Right cardiac atrium (tissue), 5 donors: ENCODE measurements at regions of chr4 and their contacts with region 1.

Region 1: DNA sequence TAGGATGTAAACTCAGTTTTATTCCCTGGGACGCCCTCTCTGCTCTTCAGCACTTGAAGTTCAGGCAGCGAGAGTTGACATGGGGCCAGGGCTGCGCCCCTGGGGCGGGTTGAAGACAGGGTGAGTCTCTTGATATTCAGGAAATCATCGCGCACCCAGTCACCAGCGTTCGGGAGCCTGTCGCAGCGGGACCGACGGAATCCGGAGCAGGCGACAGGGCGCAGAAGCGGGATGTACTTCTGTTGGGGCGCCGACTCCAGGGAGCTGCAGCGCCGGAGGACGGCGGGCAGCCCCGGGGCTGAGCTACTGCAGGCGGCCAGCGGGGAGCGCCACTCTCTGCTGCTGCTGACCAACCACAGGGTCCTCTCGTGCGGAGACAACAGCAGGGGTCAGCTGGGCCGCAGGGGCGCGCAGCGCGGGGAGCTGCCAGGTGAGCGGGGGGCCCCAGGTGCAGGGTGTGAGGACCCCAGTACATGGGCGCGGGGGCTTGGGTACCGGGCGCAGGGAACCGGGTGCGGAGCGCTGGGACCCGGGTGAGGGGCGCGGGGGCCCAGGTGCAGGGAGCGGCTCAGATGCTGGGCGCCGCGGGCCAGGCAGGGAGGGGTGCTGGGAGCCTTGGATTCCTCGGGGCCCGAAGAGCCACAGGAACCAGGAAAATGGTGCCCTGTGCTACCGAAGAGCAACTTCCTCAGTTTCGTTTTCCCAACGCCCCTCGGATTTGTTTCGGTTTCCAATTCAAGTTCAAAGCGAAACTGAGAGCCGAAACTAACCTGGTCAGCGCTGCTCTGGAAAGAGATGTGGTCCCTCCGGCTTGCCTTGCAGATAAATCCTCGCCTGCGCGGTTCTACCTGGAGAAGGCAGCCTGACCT is at the start of gene HERC6:
- DNase-seq: peak; percentile 79 to 91 (median 90)
- ATAC-seq: peak; percentile 97
- H3K4me3 ChIP-seq: peak within 1 kb of the TSS; percentile 92
- H3K27ac ChIP-seq: peak within 1 kb of the TSS; percentile 76
- H3K4me1 ChIP-seq: no peaks in the 10 kb centered on the region
- H3K27me3 ChIP-seq: no peaks in the 10 kb centered on the region
- total RNA-seq, gene HERC6: 7.7 to 10.9 (median 9.8) TPM

Region 2: DNA sequence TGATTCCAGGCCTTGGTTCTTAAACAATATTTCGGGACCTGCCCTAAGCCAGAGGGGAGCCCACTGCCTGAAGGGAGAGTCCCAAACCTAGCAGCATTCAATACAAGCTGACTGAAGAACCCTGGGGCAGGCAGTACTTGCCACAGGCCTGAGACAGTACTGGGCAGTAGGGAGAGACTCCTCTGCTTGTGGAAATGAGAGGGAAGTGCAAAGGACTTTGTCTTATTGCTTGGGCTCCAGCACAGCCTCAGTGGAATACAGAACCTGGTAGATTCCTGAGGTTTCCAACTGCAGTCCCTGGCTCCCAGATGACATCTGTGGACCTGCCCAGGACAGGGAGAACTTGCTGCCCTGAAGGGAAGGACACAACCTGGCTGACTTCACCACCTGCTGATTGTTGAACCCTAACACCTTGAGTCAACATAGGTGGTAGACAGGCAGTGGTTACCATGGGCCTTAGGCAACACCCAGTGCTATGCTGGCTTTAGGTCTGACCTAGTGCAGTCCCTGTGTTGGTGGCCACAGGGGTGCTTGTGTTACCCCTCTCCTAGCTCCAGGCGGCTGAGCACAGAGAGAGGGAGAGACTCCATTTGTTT is 200.2 kb before region 1 on chr4:
- intact Hi-C with region 1: no loop called
- DNase-seq: no peak
- ATAC-seq: no peak
- H3K4me3 ChIP-seq: no peak overlapping the region
- H3K27ac ChIP-seq: no peak overlapping the region
- H3K4me1 ChIP-seq: no peaks in the 10 kb centered on the region
- H3K27me3 ChIP-seq: no peaks in the 10 kb centered on the region

Region 3: GRCh38 chr4:88225232-88226105 is 153.5 kb before region 1 on chr4:
- intact Hi-C with region 1: loop called in 1 of 4 experiments (anchors 5 kb)
- DNase-seq: no peak
- ATAC-seq: peak; percentile 26 to 41
- H3K4me3 ChIP-seq: no peak overlapping the region
- H3K27ac ChIP-seq: peak overlapping the region; percentile 6
- H3K4me1 ChIP-seq: peaks cover 2% of the 10 kb centered on the region
- H3K27me3 ChIP-seq: no peaks in the 10 kb centered on the region

Region 4: GRCh38 chr4:88284439-88285234 is 94.3 kb before region 1 on chr4 and contains the start of gene PPM1K:
- intact Hi-C with region 1: loop called in 1 of 4 experiments (anchors 10 kb)
- DNase-seq: peak; percentile 100
- ATAC-seq: peak; percentile 99
- H3K4me3 ChIP-seq: peak within 1 kb of the TSS; percentile 77
- H3K27ac ChIP-seq: peak within 1 kb of the TSS; percentile 96
- H3K4me1 ChIP-seq: peaks cover 2% of the 10 kb centered on the region
- H3K27me3 ChIP-seq: no peaks in the 10 kb centered on the region
- total RNA-seq, gene PPM1K: 74.6 to 109 (median 91.3) TPM

Region 5: DNA sequence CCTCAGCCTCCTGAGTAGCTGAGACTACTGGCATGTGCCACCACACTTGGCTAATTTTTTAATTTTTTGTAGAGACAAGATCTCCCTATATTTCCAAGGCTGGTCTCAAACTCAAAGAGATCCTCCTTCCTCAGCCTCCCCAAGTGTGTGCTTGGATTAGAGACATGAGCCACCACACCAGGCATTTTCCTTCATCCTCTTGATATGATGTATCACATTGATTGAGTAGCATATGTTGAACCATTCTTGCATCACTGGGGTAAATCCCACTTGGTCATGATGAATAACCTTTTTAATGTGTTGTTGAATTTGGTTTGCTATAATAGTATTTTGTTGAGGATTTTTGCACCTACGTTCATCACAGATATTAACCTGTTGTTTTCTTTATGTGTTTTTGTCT is 70.3 kb before region 1 on chr4:
- intact Hi-C with region 1: no loop called
- DNase-seq: no peak
- ATAC-seq: no peak
- H3K4me3 ChIP-seq: no peak overlapping the region
- H3K27ac ChIP-seq: no peak overlapping the region
- H3K4me1 ChIP-seq: no peaks in the 10 kb centered on the region
- H3K27me3 ChIP-seq: no peaks in the 10 kb centered on the region

Region 6: DNA sequence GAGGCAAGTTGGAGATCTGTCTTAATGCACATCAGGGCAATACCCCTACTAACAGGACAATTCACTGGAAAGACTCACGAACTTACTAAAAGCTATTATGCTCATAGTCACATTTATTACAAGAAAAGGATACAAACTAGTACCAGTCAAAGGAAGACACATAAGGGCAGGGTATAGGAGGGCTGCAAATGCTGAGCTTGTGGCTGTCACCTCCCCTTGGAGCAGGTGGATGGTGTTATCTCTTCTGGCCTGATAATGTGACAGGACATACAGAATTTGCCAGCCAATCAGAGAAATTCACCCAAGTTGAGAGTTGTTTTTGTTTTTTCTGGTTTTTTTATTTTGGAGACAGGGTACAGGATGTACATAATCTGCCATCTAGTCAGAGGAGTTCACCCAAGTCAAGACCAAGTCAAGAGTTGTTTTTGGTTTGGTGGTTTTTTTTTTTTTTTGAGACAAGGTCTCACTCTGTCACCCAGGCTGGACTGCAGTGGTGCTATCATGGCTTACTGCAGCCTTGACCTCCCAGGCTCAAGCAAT is 86.8 kb after region 1 on chr4:
- intact Hi-C with region 1: loop called in 1 of 4 experiments (anchors 10 kb)
- DNase-seq: no peak
- ATAC-seq: no peak
- H3K4me3 ChIP-seq: no peak overlapping the region
- H3K27ac ChIP-seq: no peak overlapping the region
- H3K4me1 ChIP-seq: no peaks in the 10 kb centered on the region
- H3K27me3 ChIP-seq: no peaks in the 10 kb centered on the region

Region 7: GRCh38 chr4:88481537-88481936 is 102.6 kb after region 1 on chr4:
- intact Hi-C with region 1: no loop called
- DNase-seq: no peak
- ATAC-seq: no peak
- H3K4me3 ChIP-seq: no peak overlapping the region
- H3K27ac ChIP-seq: no peak overlapping the region
- H3K4me1 ChIP-seq: no peaks in the 10 kb centered on the region
- H3K27me3 ChIP-seq: no peaks in the 10 kb centered on the region